Gastrocnemius medialis (tissue), 4 donors: ENCODE measurements at regions of chr5 and their contacts with region 1.

Region 1: GRCh38 chr5:55969956-55970355 is 24.8 kb downstream of the IL6ST start:
- DNase-seq: no peak
- ATAC-seq: no peak
- H3K4me3 ChIP-seq: no peak overlapping the region
- H3K27ac ChIP-seq: no peak overlapping the region
- H3K4me1 ChIP-seq: peaks cover 0 to 7% of the 10 kb centered on the region in 2 donors
- H3K27me3 ChIP-seq: no peaks in the 10 kb centered on the region
- CTCF ChIP-seq: no peak
- POLR2A ChIP-seq: no peak

Region 2: GRCh38 chr5:55278778-55279177 is 691.2 kb before region 1 on chr5:
- in situ Hi-C with region 1: loop called in 2 of 4 experiments (anchors 25 kb)
- intact Hi-C with region 1: no loop called
- DNase-seq: no peak
- ATAC-seq: no peak
- H3K4me3 ChIP-seq: no peak overlapping the region
- H3K27ac ChIP-seq: no peak overlapping the region
- H3K4me1 ChIP-seq: no peaks in the 10 kb centered on the region
- H3K27me3 ChIP-seq: no peaks in the 10 kb centered on the region
- CTCF ChIP-seq: no peak
- POLR2A ChIP-seq: no peak

Region 3: DNA sequence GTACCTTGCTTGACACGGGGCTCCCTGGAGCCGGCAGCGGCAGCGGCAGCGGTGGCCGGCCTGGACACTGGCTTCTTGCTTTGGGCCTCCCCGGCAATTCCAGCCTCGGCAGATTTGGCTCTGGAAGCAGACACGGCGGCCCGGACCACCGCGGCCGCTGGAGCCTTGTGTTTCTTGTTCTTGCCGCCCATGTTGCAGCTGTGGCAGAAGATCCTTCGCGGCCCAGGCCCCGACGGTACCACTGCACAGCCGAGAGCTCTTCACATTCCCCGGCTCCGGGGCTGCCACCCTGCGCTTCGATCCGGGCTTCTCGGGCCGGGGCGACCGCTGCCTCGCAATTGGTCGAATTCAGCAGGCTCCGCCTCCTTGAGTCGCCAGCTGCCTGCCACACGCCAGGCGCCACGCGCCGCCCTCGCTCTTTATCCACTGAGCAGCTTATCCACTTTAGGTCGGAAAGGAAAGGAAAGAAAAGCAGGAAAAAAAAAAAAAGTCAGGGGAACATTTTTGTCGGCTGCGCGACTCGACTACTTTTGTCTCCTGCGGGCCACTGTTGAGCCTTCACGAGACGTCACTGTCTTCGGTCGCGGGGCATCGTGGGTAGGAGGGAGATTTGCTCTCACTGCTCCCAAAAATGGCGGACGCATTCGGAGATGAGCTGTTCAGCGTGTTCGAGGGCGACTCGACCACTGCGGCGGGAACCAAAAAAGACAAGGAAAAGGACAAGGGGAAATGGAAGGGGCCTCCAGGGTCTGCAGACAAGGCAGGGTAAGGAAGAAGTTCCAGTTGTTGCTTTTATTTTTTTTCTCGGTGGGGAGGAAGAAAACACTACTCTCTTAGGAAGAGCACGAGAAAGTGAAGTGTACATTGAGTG is 662.3 kb before region 1 on chr5 and contains the starts of genes DHX29 and MTREX:
- in situ Hi-C with region 1: loop called in 1 of 4 experiments (anchors 25 kb)
- intact Hi-C with region 1: no loop called
- DNase-seq: peak; percentile 84 to 86
- ATAC-seq: peak; percentile 96
- H3K4me3 ChIP-seq: peak within 1 kb of the TSS; percentile 64 to 97 (median 86)
- H3K27ac ChIP-seq: peak within 1 kb of the TSS; percentile 86 to 96 (median 95)
- H3K4me1 ChIP-seq: peaks cover 47 to 68% of the 10 kb centered on the region in 2 donors
- H3K27me3 ChIP-seq: no peaks in the 10 kb centered on the region
- CTCF ChIP-seq: no peak
- POLR2A ChIP-seq: peak; percentile 63 to 64
- total RNA-seq, gene DHX29: 33.1 to 44.6 (median 41.0) TPM
- total RNA-seq, gene MTREX: 92.4 to 124 (median 109) TPM